A673 (cell line): ENCODE measurements at regions of chr5 and their contacts with region 1.

Region 1: DNA sequence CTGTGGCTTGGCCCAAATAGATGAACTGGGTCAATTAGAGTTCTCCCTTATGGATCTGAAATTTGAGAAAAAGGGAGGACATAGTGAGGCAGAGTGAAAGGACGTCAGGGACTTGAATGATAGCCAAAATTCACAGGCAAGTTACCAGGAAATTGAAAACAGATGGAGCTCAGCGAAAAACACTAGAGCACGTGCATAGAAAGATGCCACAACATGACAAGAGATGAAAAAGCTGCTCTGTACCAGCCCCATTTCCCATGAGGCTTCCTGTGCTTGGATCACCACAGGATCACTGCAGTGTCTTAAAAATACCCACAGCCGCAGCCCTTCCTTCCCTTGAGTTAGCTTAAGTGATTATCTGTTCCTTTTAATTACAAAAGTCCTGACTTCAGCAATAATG is 39.0 kb upstream of the HOMER1 start:
- DNase-seq: peak; percentile 88
- H3K4me3 ChIP-seq: no peak overlapping the region
- H3K27ac ChIP-seq: no peak overlapping the region
- H3K4me1 ChIP-seq: peaks cover 19% of the 10 kb centered on the region
- H3K27me3 ChIP-seq: peaks cover 12% of the 10 kb centered on the region
- CTCF ChIP-seq: no peak

Region 2: DNA sequence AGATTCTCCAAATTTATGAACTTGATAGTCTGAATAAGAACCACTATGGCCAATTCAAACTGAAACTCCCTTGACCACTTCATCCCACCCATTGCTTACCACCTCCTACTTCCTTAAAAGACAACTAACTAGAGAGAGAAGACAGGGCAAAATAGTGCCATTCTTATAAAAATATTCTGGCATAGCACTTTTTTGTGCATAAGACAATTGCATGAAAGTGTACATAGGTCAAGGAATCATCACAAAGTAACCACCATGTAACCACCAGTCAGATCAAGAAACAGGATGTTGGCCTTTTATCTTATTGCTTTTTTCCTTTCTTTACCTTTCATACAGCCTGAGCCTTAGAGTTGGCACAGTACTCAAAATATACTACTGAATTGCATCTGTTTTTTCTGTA is 559.8 kb before region 1 on chr5:
- CTCF ChIA-PET with region 1: no interaction called
- POLR2A ChIA-PET with region 1: no interaction called
- intact Hi-C with region 1: no loop called
- DNase-seq: no peak
- H3K4me3 ChIP-seq: no peak overlapping the region
- H3K27ac ChIP-seq: no peak overlapping the region
- H3K4me1 ChIP-seq: no peaks in the 10 kb centered on the region
- H3K27me3 ChIP-seq: no peaks in the 10 kb centered on the region
- CTCF ChIP-seq: no peak

Region 3: GRCh38 chr5:79474367-79475151 is 78.4 kb before region 1 on chr5:
- CTCF ChIA-PET with region 1: no interaction called
- POLR2A ChIA-PET with region 1: no interaction called
- intact Hi-C with region 1: loop called (anchors 1 kb)
- DNase-seq: peak; percentile 28
- H3K4me3 ChIP-seq: no peak overlapping the region
- H3K27ac ChIP-seq: no peak overlapping the region
- H3K4me1 ChIP-seq: peaks cover 13% of the 10 kb centered on the region
- H3K27me3 ChIP-seq: no peaks in the 10 kb centered on the region
- CTCF ChIP-seq: no peak